ENCODE measurements at regions of chr3 and their contacts with region 1.

Region 1: GRCh38 chr3:128123538-128124368 is at the start of gene RUVBL1:
- DNase-seq: peak; percentile 85 to 99 (median 98)
- ATAC-seq: peak; percentile 97
- H3K4me3 ChIP-seq: peak within 1 kb of the TSS; percentile 83
- H3K4me3 Mint-ChIP-seq: peak within 1 kb of the TSS; percentile 82 to 100 (median 98)
- H3K27ac ChIP-seq: peak within 1 kb of the TSS; percentile 84
- H3K27ac Mint-ChIP-seq: peak within 1 kb of the TSS; percentile 95 to 99 (median 97)
- H3K4me1 ChIP-seq: peaks cover 13 to 15% of the 10 kb centered on the region in 2 donors
- H3K4me1 Mint-ChIP-seq: peaks cover 23 to 40% (median 27%) of the 10 kb centered on the region in 7 donors
- H3K27me3 ChIP-seq: no peaks in the 10 kb centered on the region
- H3K27me3 Mint-ChIP-seq: peaks cover 0 to under 1% (median 0%) of the 10 kb centered on the region in 5 donors
- total RNA-seq, gene RUVBL1: 16.8 to 59.3 (median 22.5) TPM

Region 2: DNA sequence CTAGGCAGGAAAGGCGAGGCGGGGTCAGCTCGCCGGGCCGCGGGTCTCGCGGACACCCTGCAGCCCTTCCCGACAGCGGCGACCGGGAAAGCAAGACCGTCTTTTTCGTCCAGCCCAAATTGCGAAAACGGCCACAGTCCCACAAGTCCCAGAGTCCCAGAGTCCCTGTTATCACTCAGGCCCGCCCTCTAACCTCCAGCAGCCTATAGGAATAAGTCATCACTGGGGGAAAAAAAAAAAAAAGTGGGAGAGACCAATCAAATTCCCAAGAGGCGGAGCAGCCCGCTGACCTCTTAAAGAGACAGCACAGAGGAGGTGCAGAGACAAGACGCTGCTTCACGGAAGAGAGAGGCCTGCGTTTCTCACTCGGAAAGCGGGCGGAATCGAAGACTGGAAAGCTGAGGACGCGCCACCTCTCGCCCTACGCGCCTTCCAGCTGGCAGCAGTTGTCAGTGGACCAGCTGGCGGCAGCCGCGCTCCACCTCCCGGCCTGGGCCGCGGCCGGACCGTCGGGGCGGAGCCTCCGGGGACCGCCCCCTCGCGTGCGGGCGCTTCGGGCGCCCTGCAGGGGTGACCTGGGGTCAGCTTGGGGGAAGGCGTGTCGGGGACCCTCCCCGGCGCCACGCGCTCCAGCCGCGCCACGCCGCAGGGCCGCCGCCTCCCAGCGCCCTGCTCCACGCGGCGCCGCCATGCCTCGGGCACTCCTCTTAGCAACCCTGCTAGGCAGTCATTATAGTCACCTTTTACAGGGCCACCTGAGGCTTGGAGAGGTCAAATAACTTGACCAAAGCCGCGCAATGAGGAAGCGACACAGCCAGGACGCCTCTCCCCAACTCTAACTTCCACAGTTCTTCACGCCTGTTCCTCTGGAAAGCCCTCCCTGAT is 532.9 kb before region 1 on chr3 and contains the start of gene TPRA1:
- CTCF ChIA-PET with region 1: no interaction called
- POLR2A ChIA-PET with region 1: no interaction called
- intact Hi-C with region 1: loop called in 1 of 2 experiments (anchors 5 kb)
- DNase-seq: peak; percentile 58 to 90 (median 85)
- ATAC-seq: peak; percentile 90
- H3K4me3 ChIP-seq: peak within 1 kb of the TSS; percentile 91
- H3K4me3 Mint-ChIP-seq: peak within 1 kb of the TSS; percentile 86 to 99 (median 96)
- H3K27ac ChIP-seq: peak within 1 kb of the TSS; percentile 80
- H3K27ac Mint-ChIP-seq: peak within 1 kb of the TSS; percentile 86 to 96 (median 94)
- H3K4me1 ChIP-seq: peaks cover 11 to 12% of the 10 kb centered on the region in 2 donors
- H3K4me1 Mint-ChIP-seq: peaks cover 14 to 51% (median 43%) of the 10 kb centered on the region in 7 donors
- H3K27me3 ChIP-seq: no peaks in the 10 kb centered on the region
- H3K27me3 Mint-ChIP-seq: no peaks in the 10 kb centered on the region
- total RNA-seq, gene TPRA1: 13.6 to 30.6 (median 24.5) TPM

Region 3: GRCh38 chr3:128112357-128112968 is 11.3 kb before region 1 on chr3:
- CTCF ChIA-PET with region 1: interaction called, 4 read pairs
- POLR2A ChIA-PET with region 1: interaction called, 14 read pairs
- intact Hi-C with region 1: loop called (anchors 1 kb)
- DNase-seq: peak in 7 of 9 donors; percentile 19 to 52 (median 31)
- ATAC-seq: peak; percentile 85
- H3K4me3 ChIP-seq: no peak overlapping the region
- H3K4me3 Mint-ChIP-seq: peak overlapping the region in 7 of 10 donors; percentile 24 to 67 (median 55)
- H3K27ac ChIP-seq: peak overlapping the region; percentile 56
- H3K27ac Mint-ChIP-seq: peak overlapping the region; percentile 52 to 95 (median 83)
- H3K4me1 ChIP-seq: peaks cover 14 to 27% of the 10 kb centered on the region in 2 donors
- H3K4me1 Mint-ChIP-seq: peaks cover 19 to 46% (median 40%) of the 10 kb centered on the region in 7 donors
- H3K27me3 ChIP-seq: no peaks in the 10 kb centered on the region
- H3K27me3 Mint-ChIP-seq: no peaks in the 10 kb centered on the region

Region 4: DNA sequence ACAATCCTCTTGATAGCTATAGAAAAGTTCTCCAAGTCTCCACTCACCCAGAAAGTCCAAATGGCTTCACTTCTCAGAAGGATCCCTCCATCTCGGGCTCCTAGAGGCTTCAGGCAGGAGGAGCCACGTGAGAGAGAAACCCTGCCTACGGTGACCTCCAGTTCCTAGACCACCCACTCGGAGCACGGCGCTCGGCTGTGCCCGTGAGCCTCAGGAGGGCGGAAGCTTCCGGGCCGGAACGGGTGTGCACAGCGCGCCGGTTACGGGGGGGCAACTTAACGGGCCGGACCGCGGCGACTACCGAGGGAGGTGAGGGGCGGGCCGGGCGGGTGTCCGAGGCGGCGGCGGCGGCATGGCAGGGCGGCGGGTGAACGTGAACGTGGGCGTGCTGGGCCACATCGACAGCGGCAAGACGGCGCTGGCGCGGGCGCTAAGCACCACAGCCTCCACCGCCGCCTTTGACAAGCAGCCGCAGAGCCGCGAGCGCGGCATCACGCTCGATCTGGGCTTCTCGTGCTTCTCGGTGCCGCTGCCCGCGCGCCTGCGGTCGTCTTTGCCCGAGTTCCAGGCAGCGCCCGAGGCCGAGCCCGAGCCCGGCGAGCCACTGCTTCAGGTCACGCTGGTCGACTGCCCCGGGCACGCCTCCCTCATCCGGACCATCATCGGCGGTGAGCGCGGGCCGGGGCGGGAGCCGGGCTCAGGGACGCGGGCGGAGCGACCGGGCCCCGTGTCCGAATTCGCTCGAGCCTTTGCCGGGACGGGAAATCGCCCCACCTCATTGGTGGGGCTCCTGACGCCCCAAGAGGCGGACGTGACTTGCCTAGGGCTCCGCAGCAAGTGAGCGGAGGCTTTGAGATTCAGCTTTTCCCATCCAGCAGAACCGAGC is 29.6 kb after region 1 on chr3 and contains the start of gene EEFSEC:
- CTCF ChIA-PET with region 1: interaction called, 7 read pairs
- POLR2A ChIA-PET with region 1: interaction called, 42 read pairs
- intact Hi-C with region 1: loop called (anchors 1 kb)
- DNase-seq: peak; percentile 75 to 93 (median 82)
- ATAC-seq: peak; percentile 95
- H3K4me3 ChIP-seq: peak within 1 kb of the TSS; percentile 79
- H3K4me3 Mint-ChIP-seq: peak within 1 kb of the TSS; percentile 84 to 98 (median 94)
- H3K27ac ChIP-seq: peak within 1 kb of the TSS; percentile 77
- H3K27ac Mint-ChIP-seq: peak within 1 kb of the TSS; percentile 85 to 98 (median 95)
- H3K4me1 ChIP-seq: peaks cover 13% of the 10 kb centered on the region in 2 donors
- H3K4me1 Mint-ChIP-seq: peaks cover 16 to 59% (median 47%) of the 10 kb centered on the region in 7 donors
- H3K27me3 ChIP-seq: no peaks in the 10 kb centered on the region
- H3K27me3 Mint-ChIP-seq: no peaks in the 10 kb centered on the region
- total RNA-seq, gene EEFSEC: 17.3 to 18.5 (median 17.9) TPM

Region 5: DNA sequence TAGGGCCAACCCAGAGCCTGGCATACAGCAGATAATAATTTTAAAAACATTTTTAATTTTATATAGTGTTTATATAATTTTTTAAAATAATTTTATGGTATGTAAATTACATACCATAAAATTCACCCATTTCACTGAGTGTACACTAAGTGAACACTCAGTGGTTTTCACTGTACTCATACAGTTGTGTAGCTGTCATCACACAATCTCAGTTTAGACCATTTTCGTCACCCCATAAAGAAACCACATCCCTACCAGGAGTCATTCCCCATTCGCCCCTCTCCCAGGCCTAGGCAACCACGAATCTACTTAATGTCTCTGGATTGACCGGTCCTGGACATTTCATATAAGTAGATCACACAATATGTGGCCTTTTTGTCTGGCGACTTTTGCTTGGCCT is 39.7 kb after region 1 on chr3:
- CTCF ChIA-PET with region 1: no interaction called
- POLR2A ChIA-PET with region 1: no interaction called
- intact Hi-C with region 1: no loop called
- DNase-seq: no peak
- ATAC-seq: no peak
- H3K4me3 ChIP-seq: no peak overlapping the region
- H3K4me3 Mint-ChIP-seq: no peak overlapping the region
- H3K27ac ChIP-seq: no peak overlapping the region
- H3K27ac Mint-ChIP-seq: no peak overlapping the region
- H3K4me1 ChIP-seq: no peaks in the 10 kb centered on the region
- H3K4me1 Mint-ChIP-seq: peaks cover 5 to 85% (median 61%) of the 10 kb centered on the region in 7 donors
- H3K27me3 ChIP-seq: no peaks in the 10 kb centered on the region
- H3K27me3 Mint-ChIP-seq: no peaks in the 10 kb centered on the region